Colonic mucosa (tissue), 4 donors: ENCODE measurements at regions of chr19 and their contacts with region 1.

Region 1: GRCh38 chr19:8412783-8413628 is at the start of gene MARCHF2:
- DNase-seq: peak; percentile 95
- H3K4me3 ChIP-seq: peak within 1 kb of the TSS; percentile 88
- H3K27ac ChIP-seq: no peak within 1 kb of the TSS
- H3K4me1 ChIP-seq: peaks cover 4% of the 10 kb centered on the region
- H3K27me3 ChIP-seq: no peaks in the 10 kb centered on the region
- CTCF ChIP-seq: peak; percentile 35
- total RNA-seq, gene MARCHF2: 18.8 to 33.1 TPM

Region 2: GRCh38 chr19:8500158-8500557 is 87.2 kb after region 1 on chr19:
- intact Hi-C with region 1: loop called (anchors 5 kb)
- DNase-seq: no peak
- H3K4me3 ChIP-seq: no peak overlapping the region
- H3K27ac ChIP-seq: no peak overlapping the region
- H3K4me1 ChIP-seq: no peaks in the 10 kb centered on the region
- H3K27me3 ChIP-seq: no peaks in the 10 kb centered on the region
- CTCF ChIP-seq: no peak